Endothelial cell of umbilical vein (primary cell): ENCODE measurements at regions of chr5 and their contacts with region 1.

Region 1: GRCh38 chr5:139711067-139711905 is 63.1 kb downstream of the CXXC5 start:
- DNase-seq: no peak
- H3K4me3 ChIP-seq: peak overlapping the region in 1 of 3 experiments; percentile 20
- H3K27ac ChIP-seq: no peak overlapping the region
- H3K4me1 ChIP-seq: peaks cover 7% of the 10 kb centered on the region
- H3K27me3 ChIP-seq: peaks cover 11 to 13% of the 10 kb centered on the region in 2 experiments
- CTCF ChIP-seq: peak in 1 of 2 donors; percentile 12
- POLR2A ChIP-seq: no peak

Region 2: GRCh38 chr5:139177809-139178588 is 533.3 kb before region 1 on chr5:
- CTCF ChIA-PET with region 1: no interaction called
- POLR2A ChIA-PET with region 1: no interaction called
- dilution Hi-C with region 1: no loop called
- intact Hi-C with region 1: no loop called
- DNase-seq: no peak
- H3K4me3 ChIP-seq: no peak overlapping the region
- H3K27ac ChIP-seq: no peak overlapping the region
- H3K4me1 ChIP-seq: no peaks in the 10 kb centered on the region
- H3K27me3 ChIP-seq: no peaks in the 10 kb centered on the region
- CTCF ChIP-seq: no peak
- POLR2A ChIP-seq: no peak

Region 3: DNA sequence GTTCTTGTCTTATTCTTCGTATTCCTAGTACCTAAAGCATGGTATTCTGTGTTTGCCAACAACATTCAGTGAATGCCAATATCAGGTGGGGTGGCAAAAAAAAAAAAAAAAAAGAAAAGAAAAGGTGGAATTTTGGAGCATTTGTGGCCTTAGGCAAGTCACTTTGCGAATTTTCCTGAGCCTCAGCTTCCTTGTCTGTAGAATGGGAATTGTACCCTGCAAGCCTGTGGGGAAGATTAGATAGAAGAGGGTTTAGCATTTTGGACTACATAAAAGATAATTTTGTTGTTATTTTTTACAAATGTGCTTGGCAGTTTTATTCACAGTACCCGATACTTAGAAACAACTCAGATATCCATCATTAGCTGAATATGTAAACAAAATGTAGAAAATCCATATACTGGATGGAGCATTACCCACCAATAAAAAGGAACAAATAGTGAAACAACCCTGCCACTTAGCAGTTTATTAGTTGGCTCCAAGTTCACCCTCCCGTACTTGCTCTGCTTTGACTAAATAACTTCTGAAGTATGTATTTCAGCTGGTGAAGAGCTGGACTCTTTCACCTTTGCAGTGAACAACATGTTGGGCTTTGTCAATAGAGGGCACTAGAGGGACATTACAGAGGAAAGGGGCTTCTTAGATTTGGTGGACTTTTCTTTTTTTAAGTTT is 136.5 kb before region 1 on chr5:
- CTCF ChIA-PET with region 1: no interaction called
- POLR2A ChIA-PET with region 1: no interaction called
- dilution Hi-C with region 1: no loop called
- intact Hi-C with region 1: no loop called
- DNase-seq: peak; percentile 58
- H3K4me3 ChIP-seq: no peak overlapping the region
- H3K27ac ChIP-seq: no peak overlapping the region
- H3K4me1 ChIP-seq: peaks cover 17% of the 10 kb centered on the region
- H3K27me3 ChIP-seq: no peaks in the 10 kb centered on the region
- CTCF ChIP-seq: peak; percentile 45 to 49
- POLR2A ChIP-seq: no peak

Region 4: GRCh38 chr5:139696894-139697658 is 14.2 kb before region 1 on chr5:
- CTCF ChIA-PET with region 1: interaction called, 20 read pairs
- POLR2A ChIA-PET with region 1: no interaction called
- dilution Hi-C with region 1: no loop called
- intact Hi-C with region 1: no loop called
- DNase-seq: peak; percentile 55
- H3K4me3 ChIP-seq: peak overlapping the region in 2 of 3 experiments; percentile 6 to 24
- H3K27ac ChIP-seq: peak overlapping the region; percentile 4
- H3K4me1 ChIP-seq: peaks cover 6% of the 10 kb centered on the region
- H3K27me3 ChIP-seq: peaks cover 2 to 6% of the 10 kb centered on the region in 2 experiments
- CTCF ChIP-seq: no peak
- POLR2A ChIP-seq: no peak

Region 5: GRCh38 chr5:139745800-139746690 is 34.8 kb after region 1 on chr5:
- CTCF ChIA-PET with region 1: no interaction called
- POLR2A ChIA-PET with region 1: no interaction called
- dilution Hi-C with region 1: no loop called
- intact Hi-C with region 1: loop called (anchors 2 kb)
- DNase-seq: peak; percentile 67
- H3K4me3 ChIP-seq: peak overlapping the region in 1 of 3 experiments; percentile 4
- H3K27ac ChIP-seq: no peak overlapping the region
- H3K4me1 ChIP-seq: peaks cover 18% of the 10 kb centered on the region
- H3K27me3 ChIP-seq: peaks cover 25 to 28% of the 10 kb centered on the region in 2 experiments
- CTCF ChIP-seq: no peak
- POLR2A ChIP-seq: no peak

Region 6: GRCh38 chr5:139755892-139756671 is 44.8 kb after region 1 on chr5:
- CTCF ChIA-PET with region 1: no interaction called
- POLR2A ChIA-PET with region 1: no interaction called
- dilution Hi-C with region 1: no loop called
- intact Hi-C with region 1: loop called (anchors 2 kb)
- DNase-seq: no peak
- H3K4me3 ChIP-seq: no peak overlapping the region
- H3K27ac ChIP-seq: no peak overlapping the region
- H3K4me1 ChIP-seq: no peaks in the 10 kb centered on the region
- H3K27me3 ChIP-seq: peaks cover 36 to 38% of the 10 kb centered on the region in 2 experiments
- CTCF ChIP-seq: no peak
- POLR2A ChIP-seq: no peak